Ovary (tissue), 10 donors: ENCODE measurements at regions of chr1 and their contacts with region 1.

Region 1: GRCh38 chr1:11099310-11100149 is at the start of gene EXOSC10:
- DNase-seq: peak; percentile 92 to 96 (median 94)
- H3K4me3 ChIP-seq: peak within 1 kb of the TSS; percentile 87
- H3K27ac ChIP-seq: peak within 1 kb of the TSS in 1 of 2 donors; percentile 59
- H3K4me1 ChIP-seq: peaks cover 4% of the 10 kb centered on the region
- H3K27me3 ChIP-seq: no peaks in the 10 kb centered on the region
- CTCF ChIP-seq: no peak
- EP300 ChIP-seq: no peak
- POLR2A ChIP-seq: peak; percentile 28
- total RNA-seq, gene EXOSC10: 36.1 to 56.6 (median 48.6) TPM

Region 2: DNA sequence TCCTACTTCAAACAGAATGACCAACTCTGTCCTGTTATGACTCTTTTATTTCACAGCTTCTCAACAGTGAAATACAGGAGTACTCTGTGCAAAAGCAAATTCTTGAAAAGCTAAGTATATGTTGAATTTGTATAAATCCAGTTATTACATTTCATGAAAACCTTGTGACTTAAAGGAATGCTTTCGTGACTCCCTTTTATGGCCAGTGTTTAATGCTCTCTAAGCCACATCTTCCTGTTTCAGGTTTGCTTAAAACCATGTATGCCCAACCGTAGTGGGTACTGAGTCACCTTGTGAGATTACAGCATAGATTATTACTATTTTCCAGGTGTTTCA is 929.3 kb before region 1 on chr1:
- intact Hi-C with region 1: loop called in 1 of 4 experiments (anchors 5 kb)
- DNase-seq: no peak
- H3K4me3 ChIP-seq: no peak overlapping the region
- H3K27ac ChIP-seq: peak overlapping the region in 1 of 2 donors; percentile 78
- H3K4me1 ChIP-seq: peaks cover 6% of the 10 kb centered on the region
- H3K27me3 ChIP-seq: no peaks in the 10 kb centered on the region
- CTCF ChIP-seq: no peak
- EP300 ChIP-seq: no peak
- POLR2A ChIP-seq: no peak

Region 3: GRCh38 chr1:10841118-10841517 is 258.4 kb before region 1 on chr1:
- intact Hi-C with region 1: no loop called
- DNase-seq: no peak
- H3K4me3 ChIP-seq: no peak overlapping the region
- H3K27ac ChIP-seq: no peak overlapping the region
- H3K4me1 ChIP-seq: no peaks in the 10 kb centered on the region
- H3K27me3 ChIP-seq: no peaks in the 10 kb centered on the region
- CTCF ChIP-seq: no peak
- EP300 ChIP-seq: no peak
- POLR2A ChIP-seq: no peak